CD4-positive, alpha-beta memory T cell (primary cell): ENCODE measurements at regions of chr11 and their contacts with region 1.

Region 1: GRCh38 chr11:65961232-65961901 is at the start of gene SART1:
- DNase-seq: peak; percentile 92 to 98 (median 95)
- H3K4me3 ChIP-seq: peak within 1 kb of the TSS; percentile 70 to 79
- H3K4me3 Mint-ChIP-seq: peak within 1 kb of the TSS; percentile 98 to 99 (median 98)
- H3K27ac ChIP-seq: peak within 1 kb of the TSS; percentile 96
- H3K27ac Mint-ChIP-seq: peak within 1 kb of the TSS; percentile 92 to 100 (median 99)
- H3K4me1 ChIP-seq: peaks cover 42% of the 10 kb centered on the region
- H3K4me1 Mint-ChIP-seq: peaks cover 31 to 61% (median 39%) of the 10 kb centered on the region in 4 donors
- H3K27me3 ChIP-seq: no peaks in the 10 kb centered on the region
- H3K27me3 Mint-ChIP-seq: no peaks in the 10 kb centered on the region
- total RNA-seq, gene SART1: 83.9 to 90.6 TPM

Region 2: DNA sequence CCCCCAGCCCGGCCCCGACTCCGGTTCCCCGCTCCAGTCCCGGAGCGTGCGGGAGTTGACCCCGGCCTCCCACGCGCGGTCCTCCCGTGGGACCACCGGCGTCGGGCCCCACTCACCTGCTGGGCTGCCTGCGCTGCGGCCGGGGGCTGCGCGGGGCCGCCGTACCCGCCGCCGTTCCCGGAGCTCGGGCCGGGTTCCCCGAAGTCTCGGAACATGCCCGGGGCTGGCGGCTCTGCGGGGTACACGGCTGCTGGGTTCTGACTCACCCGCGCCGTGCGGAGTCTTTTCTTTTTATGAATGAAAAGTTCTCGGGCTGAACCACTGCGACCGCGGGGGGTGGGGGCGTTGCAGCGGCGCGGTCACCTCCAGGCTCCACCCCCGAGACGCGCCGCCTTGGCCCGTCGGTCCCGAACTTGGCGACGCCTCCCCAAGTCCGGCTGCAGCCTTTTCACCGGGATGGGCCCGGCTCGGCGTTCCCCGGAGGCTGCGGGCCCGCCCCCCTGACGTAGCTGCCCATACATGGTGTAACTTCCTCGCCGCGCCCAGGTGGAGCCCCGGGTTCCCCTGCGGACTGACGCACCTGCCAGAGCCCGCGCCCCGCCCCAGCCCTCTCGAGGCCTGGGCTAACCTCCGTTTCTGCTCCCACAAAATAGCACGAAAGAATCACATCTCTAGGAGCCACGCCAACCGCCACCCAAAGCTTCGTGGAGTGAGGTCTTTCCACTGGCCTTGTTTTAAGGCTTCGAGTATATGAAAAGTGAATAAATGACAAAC is 61.1 kb before region 1 on chr11 and contains the start of gene FOSL1:
- CTCF ChIA-PET with region 1: interaction called, 4 read pairs
- POLR2A ChIA-PET with region 1: interaction called, 4 read pairs
- intact Hi-C with region 1: loop called (anchors 1 kb)
- DNase-seq: peak; percentile 91 to 98 (median 92)
- H3K4me3 ChIP-seq: peak within 1 kb of the TSS; percentile 17 to 51
- H3K4me3 Mint-ChIP-seq: peak within 1 kb of the TSS; percentile 57 to 84 (median 65)
- H3K27ac ChIP-seq: peak within 1 kb of the TSS; percentile 46
- H3K27ac Mint-ChIP-seq: peak within 1 kb of the TSS; percentile 69 to 93 (median 88)
- H3K4me1 ChIP-seq: peaks cover 21% of the 10 kb centered on the region
- H3K4me1 Mint-ChIP-seq: peaks cover 5 to 28% (median 7%) of the 10 kb centered on the region in 4 donors
- H3K27me3 ChIP-seq: peaks cover 4% of the 10 kb centered on the region
- H3K27me3 Mint-ChIP-seq: peaks cover 0 to 1% of the 10 kb centered on the region in 2 donors
- total RNA-seq, gene FOSL1: 0.39 to 0.79 TPM

Region 3: DNA sequence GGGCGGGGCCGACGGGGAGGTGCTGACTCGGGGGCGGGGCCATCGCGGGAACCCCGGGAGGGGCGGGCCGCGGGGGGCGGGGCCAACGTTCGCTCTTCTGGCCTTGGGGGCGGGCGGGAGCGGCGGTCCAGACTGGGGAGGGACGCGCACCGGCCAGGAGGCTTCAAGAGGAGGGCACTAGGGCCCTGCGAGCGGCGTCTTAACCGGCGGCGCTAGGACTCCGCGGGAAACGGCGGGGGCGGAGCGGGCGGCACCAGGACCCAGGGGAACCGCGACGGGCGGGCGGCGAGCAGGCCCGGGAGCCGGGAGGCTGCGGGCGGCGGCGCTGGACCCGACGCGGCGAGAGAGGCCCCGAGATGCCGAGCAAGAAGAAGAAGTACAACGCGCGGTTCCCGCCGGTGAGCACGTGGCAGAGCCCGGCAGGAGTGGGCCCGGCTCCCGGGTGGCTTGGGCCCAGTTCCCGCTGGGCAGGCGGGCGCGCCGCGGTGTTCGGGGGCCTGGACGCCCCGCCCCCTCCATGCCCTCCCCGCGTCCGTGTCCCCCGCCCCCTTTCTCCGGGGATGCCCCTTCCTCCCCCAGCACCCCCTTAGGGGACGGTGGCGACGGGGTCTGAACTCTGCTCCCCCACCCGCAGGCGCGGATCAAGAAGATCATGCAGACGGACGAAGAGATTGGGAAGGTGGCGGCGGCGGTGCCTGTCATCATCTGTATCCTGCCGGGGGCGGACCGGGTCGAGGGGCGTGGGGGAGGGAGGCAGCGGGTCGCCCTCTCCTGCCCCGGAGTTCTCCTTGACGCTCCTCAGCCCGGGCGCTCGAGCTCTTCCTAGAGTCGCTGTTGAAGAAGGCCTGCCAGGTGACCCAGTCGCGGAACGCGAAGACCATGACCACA is 42.0 kb before region 1 on chr11 and contains the start of gene DRAP1:
- CTCF ChIA-PET with region 1: no interaction called
- POLR2A ChIA-PET with region 1: interaction called, 45 read pairs
- intact Hi-C with region 1: loop called (anchors 1 kb)
- DNase-seq: peak; percentile 97 to 99 (median 98)
- H3K4me3 ChIP-seq: peak within 1 kb of the TSS; percentile 76 to 89
- H3K4me3 Mint-ChIP-seq: peak within 1 kb of the TSS; percentile 89 to 95 (median 92)
- H3K27ac ChIP-seq: peak within 1 kb of the TSS; percentile 86
- H3K27ac Mint-ChIP-seq: peak within 1 kb of the TSS; percentile 89 to 95 (median 93)
- H3K4me1 ChIP-seq: peaks cover 52% of the 10 kb centered on the region
- H3K4me1 Mint-ChIP-seq: peaks cover 15 to 63% (median 39%) of the 10 kb centered on the region in 4 donors
- H3K27me3 ChIP-seq: no peaks in the 10 kb centered on the region
- H3K27me3 Mint-ChIP-seq: no peaks in the 10 kb centered on the region
- total RNA-seq, gene DRAP1: 78.2 to 78.7 TPM

Region 4: GRCh38 chr11:65927904-65928397 is 33.4 kb before region 1 on chr11:
- CTCF ChIA-PET with region 1: interaction called, 7 read pairs
- POLR2A ChIA-PET with region 1: interaction called, 9 read pairs
- intact Hi-C with region 1: loop called (anchors 1 kb)
- DNase-seq: peak; percentile 77 to 91 (median 79)
- H3K4me3 ChIP-seq: peak overlapping the region; percentile 30 to 66
- H3K4me3 Mint-ChIP-seq: peak overlapping the region; percentile 73 to 90 (median 82)
- H3K27ac ChIP-seq: peak overlapping the region; percentile 72
- H3K27ac Mint-ChIP-seq: peak overlapping the region; percentile 84 to 98 (median 95)
- H3K4me1 ChIP-seq: peaks cover 24% of the 10 kb centered on the region
- H3K4me1 Mint-ChIP-seq: peaks cover 18 to 34% (median 25%) of the 10 kb centered on the region in 4 donors
- H3K27me3 ChIP-seq: no peaks in the 10 kb centered on the region
- H3K27me3 Mint-ChIP-seq: no peaks in the 10 kb centered on the region

Region 5: GRCh38 chr11:66001942-66002647 is 40.7 kb after region 1 on chr11 and contains the starts of genes BANF1 and EIF1AD:
- CTCF ChIA-PET with region 1: no interaction called
- POLR2A ChIA-PET with region 1: interaction called, 19 read pairs
- intact Hi-C with region 1: loop called (anchors 1 kb)
- DNase-seq: peak; percentile 95 to 97 (median 96)
- H3K4me3 ChIP-seq: peak within 1 kb of the TSS; percentile 68 to 82
- H3K4me3 Mint-ChIP-seq: peak within 1 kb of the TSS; percentile 94 to 100 (median 99)
- H3K27ac ChIP-seq: peak within 1 kb of the TSS; percentile 87
- H3K27ac Mint-ChIP-seq: peak within 1 kb of the TSS; percentile 96 to 99 (median 99)
- H3K4me1 ChIP-seq: peaks cover 26% of the 10 kb centered on the region
- H3K4me1 Mint-ChIP-seq: peaks cover 12 to 49% (median 27%) of the 10 kb centered on the region in 4 donors
- H3K27me3 ChIP-seq: no peaks in the 10 kb centered on the region
- H3K27me3 Mint-ChIP-seq: no peaks in the 10 kb centered on the region
- total RNA-seq, gene BANF1: 90.8 to 92.9 TPM
- total RNA-seq, gene EIF1AD: 60.2 to 65.4 TPM

Region 6: DNA sequence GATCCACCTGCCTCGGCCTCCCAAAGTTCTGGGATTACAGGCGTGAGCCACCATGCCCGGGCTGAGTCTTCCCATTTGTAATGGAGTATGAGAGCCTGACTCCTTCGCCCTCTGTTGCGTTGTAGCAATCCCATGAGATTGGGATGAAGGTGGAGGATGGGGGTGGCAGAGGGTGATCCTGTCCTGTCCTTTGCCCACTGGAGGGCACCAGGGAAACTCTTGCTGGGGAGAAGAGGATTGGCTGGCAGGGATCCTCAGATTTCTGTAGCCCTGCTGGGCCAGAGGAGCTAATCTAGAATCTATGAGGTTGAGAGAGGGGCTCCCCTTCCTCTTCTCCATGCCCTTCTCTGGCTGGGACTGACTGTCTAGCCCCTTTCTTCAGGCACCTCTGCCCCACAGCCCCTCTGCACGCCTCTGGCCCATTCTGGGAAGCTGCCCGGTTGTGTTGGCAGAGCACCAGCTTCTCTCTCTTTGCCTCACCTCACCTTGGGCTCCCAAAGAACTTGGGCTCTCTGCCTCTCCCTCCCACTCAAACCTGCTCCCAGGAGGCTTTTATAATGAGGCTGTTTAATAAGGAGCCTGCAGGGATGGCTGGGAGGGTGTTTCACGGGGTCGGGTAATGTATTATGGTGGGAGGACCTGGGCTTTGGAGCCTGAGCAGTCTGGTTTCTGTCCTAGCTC is 74.4 kb after region 1 on chr11:
- CTCF ChIA-PET with region 1: no interaction called
- POLR2A ChIA-PET with region 1: no interaction called
- intact Hi-C with region 1: no loop called
- DNase-seq: no peak
- H3K4me3 ChIP-seq: no peak overlapping the region
- H3K4me3 Mint-ChIP-seq: no peak overlapping the region
- H3K27ac ChIP-seq: no peak overlapping the region
- H3K27ac Mint-ChIP-seq: no peak overlapping the region
- H3K4me1 ChIP-seq: no peaks in the 10 kb centered on the region
- H3K4me1 Mint-ChIP-seq: no peaks in the 10 kb centered on the region
- H3K27me3 ChIP-seq: no peaks in the 10 kb centered on the region
- H3K27me3 Mint-ChIP-seq: peaks cover 0 to 4% of the 10 kb centered on the region in 2 donors